Left colon (tissue), 2 donors: ENCODE measurements at regions of chr18 and their contacts with region 1.

Region 1: GRCh38 chr18:12659904-12660605 is 2.1 kb upstream of the SPIRE1 start:
- DNase-seq: peak in 1 of 2 donors; percentile 47
- ATAC-seq: peak; percentile 44

Region 2: DNA sequence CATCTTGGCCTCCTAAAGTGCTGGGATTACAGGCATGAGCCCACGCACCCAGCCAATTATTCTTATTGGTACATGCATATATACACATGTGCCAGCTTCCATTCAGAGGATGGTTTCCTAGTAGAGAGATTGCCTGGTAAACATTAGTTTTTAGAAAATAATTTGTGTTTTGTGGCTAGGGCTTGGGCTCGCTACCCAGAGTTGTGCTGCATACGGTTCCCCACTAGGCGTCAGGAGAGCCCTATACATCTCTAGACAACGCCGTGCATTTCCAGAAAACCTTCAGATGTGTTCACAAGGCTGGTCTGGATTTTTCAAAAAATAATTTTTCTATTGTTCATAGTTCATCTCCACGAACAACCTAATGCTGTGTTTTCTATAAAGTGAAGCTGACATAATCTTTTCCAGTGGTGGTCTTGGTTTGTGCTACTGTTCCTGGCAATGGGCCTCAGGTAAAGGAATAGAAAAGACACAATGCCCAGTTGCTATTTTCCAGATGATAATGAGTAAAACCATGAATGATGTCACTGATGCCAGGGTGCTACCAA is 268.4 kb before region 1 on chr18:
- intact Hi-C with region 1: loop called (anchors 2 to 5 kb)
- DNase-seq: peak in 1 of 2 donors; percentile 62
- ATAC-seq: peak; percentile 60

Region 3: GRCh38 chr18:12397254-12397653 is 262.8 kb before region 1 on chr18:
- intact Hi-C with region 1: loop called (anchors 2 to 5 kb)
- DNase-seq: peak in 1 of 2 donors; percentile 21
- ATAC-seq: no peak

Region 4: DNA sequence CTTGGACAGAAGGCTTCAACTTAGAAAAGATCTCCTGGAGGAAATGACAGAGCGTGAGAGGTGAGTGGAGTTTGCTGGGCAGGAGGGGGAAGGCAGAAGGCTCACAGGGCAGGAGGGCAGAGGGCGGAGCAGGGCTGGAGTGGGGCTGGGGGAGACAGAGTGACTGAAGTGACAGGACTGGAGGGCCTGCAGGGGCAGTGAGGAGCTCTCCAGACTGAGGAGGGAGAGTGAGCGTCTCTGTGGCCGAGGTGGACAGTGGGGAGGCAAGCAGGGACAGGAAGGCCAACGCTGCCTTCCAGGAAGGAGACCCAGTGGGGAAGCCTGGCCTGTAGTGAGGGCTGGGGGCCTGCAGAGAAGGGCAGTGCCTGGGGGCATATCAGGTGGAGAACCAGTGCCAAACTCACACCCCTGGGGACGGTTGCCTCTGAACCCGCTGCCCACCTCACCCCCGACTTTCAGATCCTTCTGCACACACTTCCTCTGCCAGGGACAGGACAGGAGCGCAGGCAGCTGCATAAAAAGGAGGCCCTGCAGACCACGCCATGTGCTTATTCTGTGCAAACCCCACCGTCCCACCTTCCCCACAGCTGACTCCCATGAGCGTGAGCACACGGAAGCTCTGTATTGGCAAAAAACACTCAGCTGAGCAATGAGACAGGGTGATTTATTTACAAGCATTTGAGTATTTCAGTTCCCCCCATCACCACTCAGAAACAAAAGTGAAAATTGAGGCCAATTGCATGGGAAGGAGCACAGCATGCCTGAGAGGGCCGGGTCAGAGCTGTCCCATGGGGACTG is 822.0 kb after region 1 on chr18:
- intact Hi-C with region 1: no loop called
- DNase-seq: no peak
- ATAC-seq: no peak